ENCODE measurements at regions of chr17 and their contacts with region 1.

Region 1: GRCh38 chr17:35794988-35795824 is at the start of gene MMP28:
- DNase-seq: peak; percentile 79
- H3K4me3 ChIP-seq: peak within 1 kb of the TSS; percentile 63 to 97 (median 95)
- H3K27ac ChIP-seq: peak within 1 kb of the TSS; percentile 71
- H3K4me1 ChIP-seq: peaks cover 42% of the 10 kb centered on the region
- H3K27me3 ChIP-seq: no peaks in the 10 kb centered on the region
- CTCF ChIP-seq: no peak
- total RNA-seq, gene MMP28: 64.0 to 83.9 TPM

Region 2: GRCh38 chr17:35778641-35779196 is 16.5 kb before region 1 on chr17:
- CTCF ChIA-PET with region 1: no interaction called
- dilution Hi-C with region 1: no loop called
- in situ Hi-C with region 1: no loop called
- intact Hi-C with region 1: loop called (anchors 2 kb)
- DNase-seq: peak; percentile 43
- H3K4me3 ChIP-seq: no peak overlapping the region
- H3K27ac ChIP-seq: peak overlapping the region; percentile 76
- H3K4me1 ChIP-seq: peaks cover 35% of the 10 kb centered on the region
- H3K27me3 ChIP-seq: no peaks in the 10 kb centered on the region
- CTCF ChIP-seq: no peak

Region 3: GRCh38 chr17:35865412-35866340 is 70.5 kb after region 1 on chr17:
- CTCF ChIA-PET with region 1: no interaction called
- dilution Hi-C with region 1: no loop called
- in situ Hi-C with region 1: no loop called
- intact Hi-C with region 1: no loop called
- DNase-seq: peak; percentile 19
- H3K4me3 ChIP-seq: no peak overlapping the region
- H3K27ac ChIP-seq: no peak overlapping the region
- H3K4me1 ChIP-seq: no peaks in the 10 kb centered on the region
- H3K27me3 ChIP-seq: no peaks in the 10 kb centered on the region
- CTCF ChIP-seq: no peak

Measured in mammary epithelial cell (primary cell).